ENCODE measurements at regions of chr17 and their contacts with region 1.

Region 1: GRCh38 chr17:17356149-17356930 is 53.2 kb downstream of the NT5M start:
- DNase-seq: peak in 1 of 2 donors; percentile 79
- H3K4me3 ChIP-seq: no peak overlapping the region
- H3K27ac ChIP-seq: no peak overlapping the region
- H3K4me1 ChIP-seq: no peaks in the 10 kb centered on the region
- H3K27me3 ChIP-seq: peaks cover 3% of the 10 kb centered on the region
- CTCF ChIP-seq: peak; percentile 96 to 99 (median 97)

Region 2: DNA sequence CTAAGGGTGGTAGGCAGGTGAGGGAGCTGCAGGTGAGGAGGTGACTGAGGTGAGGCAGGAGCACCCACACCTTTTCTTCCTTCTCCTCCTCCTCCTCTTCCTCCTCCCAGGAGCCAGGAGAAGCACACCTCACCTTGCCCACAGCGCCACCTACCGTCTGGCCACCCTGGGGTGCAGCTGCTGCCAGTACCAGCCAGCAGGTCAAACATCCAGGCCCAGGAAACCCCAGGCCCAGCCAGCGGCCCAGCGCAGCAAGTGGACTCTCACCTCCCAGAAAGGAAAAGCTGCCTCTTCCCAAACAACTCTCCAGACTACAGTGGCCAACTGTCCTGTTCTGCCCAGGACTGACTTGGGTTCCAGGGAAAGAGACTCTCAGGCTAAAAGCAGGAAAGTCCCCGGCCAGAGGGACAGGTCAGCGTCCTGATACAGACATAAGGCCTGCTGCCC is 212.4 kb after region 1 on chr17:
- intact Hi-C with region 1: loop called (anchors 2 kb)
- DNase-seq: no peak
- H3K4me3 ChIP-seq: no peak overlapping the region
- H3K27ac ChIP-seq: no peak overlapping the region
- H3K4me1 ChIP-seq: peaks cover 13 to 34% of the 10 kb centered on the region in 2 donors
- H3K27me3 ChIP-seq: no peaks in the 10 kb centered on the region
- CTCF ChIP-seq: peak; percentile 28 to 57 (median 43)

Region 3: GRCh38 chr17:17641621-17642409 is 285.5 kb after region 1 on chr17:
- intact Hi-C with region 1: loop called (anchors 1 kb)
- DNase-seq: peak in 1 of 2 donors; percentile 85
- H3K4me3 ChIP-seq: no peak overlapping the region
- H3K27ac ChIP-seq: no peak overlapping the region
- H3K4me1 ChIP-seq: no peaks in the 10 kb centered on the region
- H3K27me3 ChIP-seq: no peaks in the 10 kb centered on the region
- CTCF ChIP-seq: peak; percentile 75 to 93 (median 80)